Activated CD4-positive, alpha-beta T cell treated with anti-CD3 and anti-CD28 coated beads for 36 hours (primary cell): ENCODE measurements at regions of chr4 and their contacts with region 1.

Region 1: GRCh38 chr4:185039508-185040273 is 21.4 kb downstream of the HELT start:
- DNase-seq: peak; percentile 70
- ATAC-seq: peak; percentile 93
- H3K4me3 Mint-ChIP-seq: peak overlapping the region; percentile 58
- H3K27ac Mint-ChIP-seq: peak overlapping the region; percentile 78
- H3K4me1 Mint-ChIP-seq: peaks cover 4% of the 10 kb centered on the region
- H3K27me3 Mint-ChIP-seq: peaks cover 5% of the 10 kb centered on the region

Region 2: DNA sequence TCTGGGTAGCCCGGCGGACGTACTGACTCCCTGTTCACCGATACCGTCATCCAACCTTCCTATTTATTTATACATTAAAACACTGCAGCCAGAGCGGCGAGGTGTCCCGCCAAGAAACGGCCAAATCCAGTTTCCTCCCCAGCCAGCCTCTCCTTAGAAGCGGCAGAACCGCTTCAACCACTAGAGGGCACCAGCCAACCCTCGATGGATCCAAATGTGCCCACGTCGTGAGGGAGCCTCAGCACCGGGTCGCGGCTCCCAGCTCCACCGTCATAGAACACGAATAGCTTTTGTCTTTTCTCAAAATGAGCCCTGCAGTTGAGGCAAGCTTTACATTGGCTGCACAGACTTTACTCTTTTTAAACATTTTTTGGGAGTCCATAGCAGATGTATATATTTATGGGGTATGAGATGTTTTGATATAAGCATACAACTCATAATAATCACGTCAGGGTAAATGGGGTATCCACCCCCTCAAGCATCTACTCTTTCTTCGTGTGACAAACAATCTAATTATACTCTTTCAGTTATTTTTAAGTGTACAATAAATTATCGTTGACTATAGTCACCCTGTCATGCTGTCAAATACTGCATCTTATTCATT is 34.4 kb before region 1 on chr4:
- CTCF ChIA-PET with region 1: interaction called, 16 read pairs
- POLR2A ChIA-PET with region 1: no interaction called
- intact Hi-C with region 1: loop called in 1 of 2 experiments (anchors 1 kb)
- DNase-seq: peak; percentile 91
- ATAC-seq: peak; percentile 98
- H3K4me3 Mint-ChIP-seq: peak overlapping the region; percentile 31
- H3K27ac Mint-ChIP-seq: no peak overlapping the region
- H3K4me1 Mint-ChIP-seq: peaks cover 4% of the 10 kb centered on the region
- H3K27me3 Mint-ChIP-seq: peaks cover 39% of the 10 kb centered on the region

Region 3: DNA sequence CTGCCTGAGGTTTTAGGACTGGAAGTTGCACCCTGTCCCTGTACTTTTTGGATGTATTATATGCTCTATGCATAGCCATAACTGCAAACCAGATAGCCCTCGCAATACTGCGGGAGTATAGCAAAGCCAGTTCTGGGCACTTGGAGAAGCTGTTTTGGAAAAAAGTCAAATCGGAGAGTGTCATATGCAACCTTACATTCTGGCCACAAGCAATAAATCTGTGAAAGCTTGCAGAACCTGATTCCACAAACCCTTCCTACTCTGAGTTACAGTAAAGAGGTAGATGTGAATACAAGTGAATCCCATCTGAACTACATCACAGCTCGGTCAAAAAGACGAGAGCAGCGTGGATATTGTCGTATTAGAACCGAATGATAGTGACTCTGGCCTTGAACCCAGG is 11.1 kb before region 1 on chr4:
- CTCF ChIA-PET with region 1: interaction called, 11 read pairs
- POLR2A ChIA-PET with region 1: no interaction called
- intact Hi-C with region 1: no loop called
- DNase-seq: no peak
- ATAC-seq: no peak
- H3K4me3 Mint-ChIP-seq: no peak overlapping the region
- H3K27ac Mint-ChIP-seq: no peak overlapping the region
- H3K4me1 Mint-ChIP-seq: no peaks in the 10 kb centered on the region
- H3K27me3 Mint-ChIP-seq: peaks cover 42% of the 10 kb centered on the region

Region 4: DNA sequence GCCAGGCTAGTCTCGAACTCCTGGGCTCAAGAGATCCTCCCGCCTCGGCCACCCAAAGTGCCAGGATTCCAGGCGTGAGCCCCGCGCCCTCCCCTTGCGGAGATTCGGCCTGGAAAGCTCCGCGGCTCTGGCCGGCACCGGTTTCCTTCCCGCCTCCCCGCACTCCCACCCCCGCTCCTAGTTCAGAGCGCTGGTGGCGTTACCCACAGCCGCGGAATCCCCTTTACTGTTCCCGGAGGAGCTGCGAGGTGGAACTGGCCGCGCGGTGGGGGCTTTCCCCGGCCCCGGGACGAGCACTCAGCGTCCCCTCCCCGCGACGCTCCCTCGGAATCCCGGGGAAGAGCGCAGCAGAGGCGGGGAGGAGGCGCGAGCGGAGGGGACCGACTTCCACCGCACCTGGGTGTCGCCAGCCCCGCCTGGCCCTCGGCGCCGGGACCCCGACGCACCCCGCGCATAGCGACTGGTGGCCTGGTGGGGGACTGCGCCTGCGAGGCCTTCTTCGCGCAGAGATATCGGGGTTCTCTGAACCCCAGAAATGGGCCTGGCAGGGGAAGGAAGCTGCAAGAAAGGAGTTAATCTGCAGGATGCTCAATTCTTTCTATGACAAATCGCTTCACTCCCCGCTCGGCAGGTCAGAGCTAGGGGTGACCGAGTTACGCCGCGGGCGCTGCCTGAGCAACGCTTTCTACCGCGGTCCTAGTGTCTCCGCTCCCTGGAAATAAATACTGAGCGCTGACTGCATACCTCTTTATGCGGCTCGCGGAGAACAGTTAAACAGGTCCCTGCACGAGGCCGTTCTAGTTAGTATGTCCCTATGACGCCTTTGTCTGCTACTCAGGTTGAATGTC is 88.8 kb after region 1 on chr4:
- CTCF ChIA-PET with region 1: interaction called, 62 read pairs
- POLR2A ChIA-PET with region 1: no interaction called
- intact Hi-C with region 1: no loop called
- DNase-seq: peak; percentile 54
- ATAC-seq: peak; percentile 75
- H3K4me3 Mint-ChIP-seq: peak overlapping the region; percentile 53
- H3K27ac Mint-ChIP-seq: no peak overlapping the region
- H3K4me1 Mint-ChIP-seq: peaks cover 9% of the 10 kb centered on the region
- H3K27me3 Mint-ChIP-seq: peaks cover 33% of the 10 kb centered on the region

Region 5: DNA sequence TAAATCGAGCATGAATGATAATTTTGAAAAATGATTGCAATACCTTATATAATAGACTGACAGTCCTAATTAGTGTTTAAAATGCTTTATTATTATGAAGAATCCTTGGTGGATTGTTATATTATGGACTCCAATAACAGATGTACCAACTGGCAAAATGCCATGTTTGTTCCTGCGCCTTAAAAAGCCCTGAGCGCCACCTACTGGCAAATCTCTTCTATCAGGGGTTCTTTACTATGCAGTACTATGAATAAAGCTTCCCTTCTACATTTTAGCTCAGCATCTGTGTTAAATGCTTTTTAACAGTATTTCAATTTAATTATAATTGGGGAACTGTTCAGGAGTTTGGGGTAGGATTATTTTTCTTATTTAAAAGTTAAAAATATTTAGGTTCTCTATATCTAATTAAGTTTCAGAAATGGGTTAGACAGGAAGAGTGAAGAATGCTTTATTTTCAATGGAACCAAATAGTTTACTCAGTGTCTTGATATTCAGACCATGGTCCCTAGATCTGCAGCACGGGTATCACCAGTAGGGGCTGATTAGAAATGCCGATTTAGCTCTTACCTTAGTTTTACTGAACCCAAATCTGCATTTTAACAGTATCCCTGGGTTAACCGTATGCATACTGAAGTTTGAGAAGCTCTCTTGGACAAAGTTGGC is 144.1 kb after region 1 on chr4:
- CTCF ChIA-PET with region 1: interaction called, 20 read pairs
- POLR2A ChIA-PET with region 1: no interaction called
- intact Hi-C with region 1: loop called (anchors 1 kb)
- DNase-seq: peak; percentile 86
- ATAC-seq: peak; percentile 65
- H3K4me3 Mint-ChIP-seq: no peak overlapping the region
- H3K27ac Mint-ChIP-seq: no peak overlapping the region
- H3K4me1 Mint-ChIP-seq: peaks cover 34% of the 10 kb centered on the region
- H3K27me3 Mint-ChIP-seq: no peaks in the 10 kb centered on the region

Region 6: GRCh38 chr4:186037692-186038658 is 998.3 kb after region 1 on chr4:
- CTCF ChIA-PET with region 1: no interaction called
- POLR2A ChIA-PET with region 1: no interaction called
- intact Hi-C with region 1: loop called in 1 of 2 experiments (anchors 10 kb)
- DNase-seq: peak; percentile 23
- ATAC-seq: no peak
- H3K4me3 Mint-ChIP-seq: no peak overlapping the region
- H3K27ac Mint-ChIP-seq: no peak overlapping the region
- H3K4me1 Mint-ChIP-seq: no peaks in the 10 kb centered on the region
- H3K27me3 Mint-ChIP-seq: peaks cover 17% of the 10 kb centered on the region